Sigmoid colon (tissue), 7 donors: ENCODE measurements at regions of chr16 and their contacts with region 1.

Region 1: GRCh38 chr16:4616047-4616811 is 1.5 kb upstream of the UBALD1 start:
- DNase-seq: peak; percentile 100
- H3K4me3 ChIP-seq: peak overlapping the region; percentile 55 to 74 (median 63)
- H3K27ac ChIP-seq: peak overlapping the region; percentile 93 to 99 (median 97)
- H3K4me1 ChIP-seq: peaks cover 0 to 61% (median 59%) of the 10 kb centered on the region in 4 donors
- H3K27me3 ChIP-seq: no peaks in the 10 kb centered on the region
- CTCF ChIP-seq: peak in 2 of 4 experiments; percentile 21 to 33
- EP300 ChIP-seq: peak in 2 of 4 donors; percentile 44 to 87
- POLR2A ChIP-seq: peak; percentile 87 to 91

Region 2: GRCh38 chr16:4517812-4518680 is 98.2 kb before region 1 on chr16:
- intact Hi-C with region 1: no loop called
- DNase-seq: no peak
- H3K4me3 ChIP-seq: no peak overlapping the region
- H3K27ac ChIP-seq: no peak overlapping the region
- H3K4me1 ChIP-seq: peaks cover 0 to 53% (median 34%) of the 10 kb centered on the region in 4 donors
- H3K27me3 ChIP-seq: no peaks in the 10 kb centered on the region
- CTCF ChIP-seq: peak in 2 of 4 experiments; percentile 18 to 27
- EP300 ChIP-seq: no peak
- POLR2A ChIP-seq: no peak

Region 3: DNA sequence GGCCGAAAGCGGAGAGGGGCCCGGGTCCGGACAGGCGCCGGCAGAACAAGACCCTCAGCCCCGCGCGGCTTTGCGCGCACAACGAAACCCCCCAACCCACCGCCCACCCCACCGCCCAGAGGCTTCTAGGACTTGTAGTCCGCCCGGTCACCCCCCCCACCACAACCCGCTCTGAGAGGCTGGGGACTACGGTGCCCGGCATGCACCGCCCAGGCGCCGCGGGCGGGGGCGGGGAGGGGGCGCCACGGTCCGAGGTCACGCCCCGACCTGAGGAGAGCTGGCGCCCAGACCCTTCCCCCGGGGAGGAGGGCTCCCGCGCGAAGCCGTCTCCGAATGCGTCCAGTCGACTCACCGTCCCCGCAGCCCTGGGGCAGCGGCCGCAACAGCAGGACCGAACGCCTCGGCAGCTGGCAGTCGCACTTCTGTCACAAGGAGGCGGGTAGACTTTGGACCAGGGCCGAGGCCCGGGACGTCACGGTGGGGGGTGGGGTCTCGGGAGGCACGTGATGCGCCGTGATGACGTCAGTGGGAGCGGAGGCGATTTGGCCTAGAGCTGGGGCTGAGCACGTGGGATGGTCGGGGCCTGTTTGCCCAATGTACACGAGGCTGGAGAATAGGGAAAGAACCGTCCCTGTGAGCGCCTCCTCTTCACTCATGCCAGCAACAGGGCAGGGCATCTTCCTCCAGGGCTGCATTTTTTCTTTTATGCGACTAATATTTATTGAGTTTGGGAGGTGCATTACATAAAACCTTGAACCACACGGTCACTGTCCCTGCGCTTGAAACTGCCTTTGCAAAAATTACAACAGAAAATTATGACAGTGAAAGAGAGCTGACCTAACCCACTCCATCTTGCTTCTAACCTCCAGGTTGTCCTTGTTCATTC is 77.6 kb before region 1 on chr16 and contains the start of gene CDIP1:
- intact Hi-C with region 1: loop called (anchors 2 kb)
- DNase-seq: peak; percentile 99
- H3K4me3 ChIP-seq: peak within 1 kb of the TSS; percentile 63 to 86 (median 82)
- H3K27ac ChIP-seq: peak within 1 kb of the TSS; percentile 83 to 91 (median 88)
- H3K4me1 ChIP-seq: peaks cover 0 to 11% (median 8%) of the 10 kb centered on the region in 4 donors
- H3K27me3 ChIP-seq: no peaks in the 10 kb centered on the region
- CTCF ChIP-seq: no peak
- EP300 ChIP-seq: peak in 2 of 4 donors; percentile 53 to 80
- POLR2A ChIP-seq: peak; percentile 22 to 66
- total RNA-seq, gene CDIP1: 12.8 to 22.4 (median 18.6) TPM

Region 4: GRCh38 chr16:4637501-4638166 is 21.4 kb after region 1 on chr16:
- intact Hi-C with region 1: no loop called
- DNase-seq: no peak
- H3K4me3 ChIP-seq: no peak overlapping the region
- H3K27ac ChIP-seq: no peak overlapping the region
- H3K4me1 ChIP-seq: peaks cover 0 to 18% (median 8%) of the 10 kb centered on the region in 4 donors
- H3K27me3 ChIP-seq: no peaks in the 10 kb centered on the region
- CTCF ChIP-seq: no peak
- EP300 ChIP-seq: no peak
- POLR2A ChIP-seq: no peak

Region 5: GRCh38 chr16:4649744-4650442 is 33.7 kb after region 1 on chr16:
- intact Hi-C with region 1: no loop called
- DNase-seq: no peak
- H3K4me3 ChIP-seq: no peak overlapping the region
- H3K27ac ChIP-seq: no peak overlapping the region
- H3K4me1 ChIP-seq: no peaks in the 10 kb centered on the region
- H3K27me3 ChIP-seq: no peaks in the 10 kb centered on the region
- CTCF ChIP-seq: no peak
- EP300 ChIP-seq: no peak
- POLR2A ChIP-seq: no peak

Region 6: GRCh38 chr16:4693296-4693955 is 77.2 kb after region 1 on chr16 and contains the start of gene NUDT16L1:
- intact Hi-C with region 1: loop called (anchors 2 kb)
- DNase-seq: peak; percentile 98
- H3K4me3 ChIP-seq: peak within 1 kb of the TSS; percentile 74 to 93 (median 88)
- H3K27ac ChIP-seq: peak within 1 kb of the TSS; percentile 88 to 93 (median 91)
- H3K4me1 ChIP-seq: peaks cover 0 to 38% (median 32%) of the 10 kb centered on the region in 4 donors
- H3K27me3 ChIP-seq: no peaks in the 10 kb centered on the region
- CTCF ChIP-seq: no peak
- EP300 ChIP-seq: no peak
- POLR2A ChIP-seq: peak; percentile 27 to 30
- total RNA-seq, gene NUDT16L1: 16.6 to 21.8 (median 18.6) TPM